CD4-positive, alpha-beta memory T cell (primary cell): ENCODE measurements at regions of chr15 and their contacts with region 1.

Region 1: DNA sequence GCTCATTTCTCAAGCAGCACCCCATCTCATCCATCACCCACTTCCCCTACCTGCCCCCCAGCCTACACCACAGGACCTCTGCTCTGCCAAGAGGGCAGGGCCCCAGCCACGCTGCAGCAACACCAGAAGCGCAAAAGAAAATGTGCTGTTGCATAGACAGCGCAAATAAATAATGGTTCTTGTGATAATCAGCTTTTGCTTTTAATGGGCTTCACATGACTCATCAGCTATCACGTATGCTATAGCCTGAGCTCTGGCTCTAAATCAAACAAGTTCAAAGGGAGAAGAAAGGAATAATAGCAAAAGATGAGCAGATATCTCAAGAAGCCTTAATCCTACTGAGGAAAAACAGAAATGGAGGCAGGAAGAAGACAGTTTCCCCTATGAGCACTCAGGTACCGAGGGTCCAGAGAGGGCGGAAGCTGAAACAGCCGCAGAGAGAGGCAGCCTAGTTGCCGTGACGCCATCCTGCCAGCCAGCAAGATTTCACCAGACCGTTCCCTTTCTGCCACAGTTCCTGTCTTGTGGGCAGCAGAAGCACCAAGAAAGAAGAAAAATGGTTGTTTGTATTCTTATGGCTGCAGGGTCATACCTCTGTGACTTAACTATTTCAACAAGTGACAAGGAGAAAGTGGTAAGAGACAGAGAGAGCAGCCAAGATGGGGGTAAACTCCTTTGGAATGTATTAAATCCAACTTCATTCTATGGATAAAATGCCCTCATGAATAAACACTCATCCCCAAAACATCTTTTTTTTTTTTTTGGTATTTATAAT is 22.0 kb downstream of the RAB27A start:
- DNase-seq: peak; percentile 77 to 89 (median 81)
- H3K4me3 ChIP-seq: peak overlapping the region in 1 of 2 donors; percentile 30
- H3K4me3 Mint-ChIP-seq: peak overlapping the region; percentile 69 to 85 (median 79)
- H3K27ac ChIP-seq: peak overlapping the region; percentile 69
- H3K27ac Mint-ChIP-seq: peak overlapping the region; percentile 90 to 98 (median 97)
- H3K4me1 ChIP-seq: peaks cover 69% of the 10 kb centered on the region
- H3K4me1 Mint-ChIP-seq: peaks cover 46 to 80% (median 62%) of the 10 kb centered on the region in 4 donors
- H3K27me3 ChIP-seq: no peaks in the 10 kb centered on the region
- H3K27me3 Mint-ChIP-seq: no peaks in the 10 kb centered on the region

Region 2: DNA sequence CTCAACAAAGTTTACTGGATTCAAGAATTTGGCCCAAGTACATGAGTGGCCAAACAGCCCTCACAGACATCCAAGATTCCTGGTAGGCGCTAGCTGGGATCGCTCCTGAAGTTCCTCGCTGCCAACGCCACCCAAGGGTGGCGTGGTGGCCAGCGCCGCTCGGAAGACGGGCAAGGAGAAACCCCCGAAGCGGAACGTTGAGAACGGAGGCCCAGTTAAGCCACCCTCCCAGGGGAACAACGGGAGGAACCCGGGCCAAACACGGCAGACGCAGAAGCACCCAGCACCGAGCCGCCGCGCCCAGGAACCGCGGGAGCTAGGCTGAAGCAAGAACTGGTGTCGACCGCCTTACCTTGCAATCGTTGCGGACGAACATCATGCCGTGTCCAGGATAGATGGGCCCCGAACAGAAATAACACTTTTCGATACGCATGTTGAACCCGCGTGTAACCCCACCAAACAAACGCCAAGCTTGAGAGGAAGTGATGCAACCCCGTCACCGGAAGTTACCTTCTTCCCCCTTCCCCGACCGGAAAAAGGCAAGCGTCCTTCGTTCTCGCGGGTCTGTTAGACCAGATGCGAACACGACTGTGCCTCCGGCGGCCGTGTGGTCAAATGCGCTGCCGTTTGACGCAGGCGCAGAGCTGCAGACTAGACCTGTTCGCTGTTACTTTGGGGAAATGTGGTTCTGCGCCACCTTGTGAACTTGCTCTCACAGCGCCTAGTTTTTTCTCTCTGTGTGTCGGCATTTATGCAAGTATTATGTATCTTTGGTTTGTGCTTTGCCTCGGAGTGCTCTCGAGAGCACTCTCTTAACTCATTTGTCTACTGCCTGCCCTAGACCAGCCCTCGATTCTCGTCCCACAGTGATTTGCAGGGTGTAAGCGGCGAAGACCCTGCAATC is 70.9 kb before region 1 on chr15 and contains the start of gene RSL24D1:
- CTCF ChIA-PET with region 1: interaction called, 9 read pairs
- POLR2A ChIA-PET with region 1: interaction called, 23 read pairs
- intact Hi-C with region 1: no loop called
- DNase-seq: peak; percentile 94 to 98 (median 97)
- H3K4me3 ChIP-seq: peak within 1 kb of the TSS; percentile 90 to 97
- H3K4me3 Mint-ChIP-seq: no peak within 1 kb of the TSS
- H3K27ac ChIP-seq: peak within 1 kb of the TSS; percentile 87
- H3K27ac Mint-ChIP-seq: no peak within 1 kb of the TSS
- H3K4me1 ChIP-seq: peaks cover 40% of the 10 kb centered on the region
- H3K4me1 Mint-ChIP-seq: peaks cover 10 to 17% (median 13%) of the 10 kb centered on the region in 4 donors
- H3K27me3 ChIP-seq: no peaks in the 10 kb centered on the region
- H3K27me3 Mint-ChIP-seq: no peaks in the 10 kb centered on the region
- total RNA-seq, gene RSL24D1: 103 to 107 TPM

Region 3: GRCh38 chr15:55250392-55250791 is 17.2 kb before region 1 on chr15:
- CTCF ChIA-PET with region 1: interaction called, 4 read pairs
- POLR2A ChIA-PET with region 1: interaction called, 47 read pairs
- intact Hi-C with region 1: loop called (anchors 1 kb)
- DNase-seq: no peak
- H3K4me3 ChIP-seq: no peak overlapping the region
- H3K4me3 Mint-ChIP-seq: peak overlapping the region in 5 of 8 donors; percentile 4 to 66 (median 8)
- H3K27ac ChIP-seq: no peak overlapping the region
- H3K27ac Mint-ChIP-seq: peak overlapping the region; percentile 5 to 89 (median 65)
- H3K4me1 ChIP-seq: peaks cover 60% of the 10 kb centered on the region
- H3K4me1 Mint-ChIP-seq: peaks cover 45 to 70% (median 55%) of the 10 kb centered on the region in 4 donors
- H3K27me3 ChIP-seq: no peaks in the 10 kb centered on the region
- H3K27me3 Mint-ChIP-seq: no peaks in the 10 kb centered on the region

Region 4: GRCh38 chr15:55279746-55280351 is 12.3 kb after region 1 on chr15:
- CTCF ChIA-PET with region 1: interaction called, 19 read pairs
- POLR2A ChIA-PET with region 1: interaction called, 201 read pairs
- intact Hi-C with region 1: loop called (anchors 1 kb)
- DNase-seq: peak; percentile 38 to 88 (median 45)
- H3K4me3 ChIP-seq: peak overlapping the region; percentile 14 to 25
- H3K4me3 Mint-ChIP-seq: peak overlapping the region; percentile 33 to 88 (median 70)
- H3K27ac ChIP-seq: peak overlapping the region; percentile 56
- H3K27ac Mint-ChIP-seq: peak overlapping the region; percentile 87 to 98 (median 95)
- H3K4me1 ChIP-seq: peaks cover 90% of the 10 kb centered on the region
- H3K4me1 Mint-ChIP-seq: peaks cover 72 to 99% (median 86%) of the 10 kb centered on the region in 4 donors
- H3K27me3 ChIP-seq: no peaks in the 10 kb centered on the region
- H3K27me3 Mint-ChIP-seq: no peaks in the 10 kb centered on the region

Region 5: GRCh38 chr15:55297315-55297714 is 29.7 kb after region 1 on chr15:
- CTCF ChIA-PET with region 1: no interaction called
- POLR2A ChIA-PET with region 1: no interaction called
- intact Hi-C with region 1: no loop called
- DNase-seq: no peak
- H3K4me3 ChIP-seq: no peak overlapping the region
- H3K4me3 Mint-ChIP-seq: no peak overlapping the region
- H3K27ac ChIP-seq: no peak overlapping the region
- H3K27ac Mint-ChIP-seq: no peak overlapping the region
- H3K4me1 ChIP-seq: no peaks in the 10 kb centered on the region
- H3K4me1 Mint-ChIP-seq: no peaks in the 10 kb centered on the region
- H3K27me3 ChIP-seq: no peaks in the 10 kb centered on the region
- H3K27me3 Mint-ChIP-seq: no peaks in the 10 kb centered on the region

Region 6: DNA sequence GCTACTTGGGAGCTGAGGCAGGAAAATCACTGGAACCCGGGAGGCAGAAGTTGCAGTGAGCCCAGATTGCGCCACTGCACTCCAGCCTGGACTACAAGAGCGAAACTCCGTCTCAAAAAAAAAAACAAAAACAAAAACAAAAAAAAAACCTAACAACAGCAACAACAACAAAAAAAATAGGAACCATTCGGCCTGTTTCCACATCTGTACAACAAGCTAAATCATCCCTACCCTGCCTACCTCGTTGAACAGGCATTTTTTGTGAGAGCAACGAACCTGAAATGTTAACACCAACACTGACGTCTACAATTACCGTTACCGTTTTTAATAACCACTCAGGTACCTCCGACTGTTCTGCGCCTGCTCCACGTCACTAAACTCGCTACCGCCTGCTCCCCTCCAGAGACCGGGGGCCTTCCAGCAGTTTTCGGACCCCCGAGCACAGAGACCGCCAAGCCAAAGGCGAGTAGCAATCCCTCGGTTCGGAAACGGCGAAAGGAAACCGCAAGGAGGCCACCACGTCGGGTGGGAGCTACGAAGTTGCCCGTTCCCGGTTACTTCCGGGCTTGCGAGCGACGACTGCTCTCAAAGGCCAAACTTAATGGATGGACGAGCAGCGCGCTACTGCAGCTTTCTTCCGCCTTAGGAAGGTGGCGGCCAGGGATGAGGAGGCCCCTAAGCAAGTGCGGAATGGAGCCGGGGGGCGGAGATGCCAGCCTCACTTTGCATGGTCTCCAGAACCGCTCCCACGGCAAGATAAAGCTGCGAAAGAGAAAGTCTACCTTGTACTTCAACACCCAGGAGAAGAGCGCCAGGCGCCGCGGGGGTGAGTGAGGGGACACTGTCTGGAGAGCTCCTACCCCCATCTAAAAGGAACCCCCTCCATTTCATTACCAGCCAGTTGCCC is 51.3 kb after region 1 on chr15 and contains the starts of genes PIGB and PIGBOS1:
- CTCF ChIA-PET with region 1: no interaction called
- POLR2A ChIA-PET with region 1: interaction called, 12 read pairs
- intact Hi-C with region 1: no loop called
- DNase-seq: peak; percentile 83 to 88 (median 87)
- H3K4me3 ChIP-seq: peak within 1 kb of the TSS; percentile 98 to 100
- H3K4me3 Mint-ChIP-seq: peak within 1 kb of the TSS; percentile 96 to 100 (median 98)
- H3K27ac ChIP-seq: peak within 1 kb of the TSS; percentile 93
- H3K27ac Mint-ChIP-seq: peak within 1 kb of the TSS; percentile 99 to 100 (median 100)
- H3K4me1 ChIP-seq: peaks cover 61% of the 10 kb centered on the region
- H3K4me1 Mint-ChIP-seq: peaks cover 44 to 82% (median 64%) of the 10 kb centered on the region in 4 donors
- H3K27me3 ChIP-seq: no peaks in the 10 kb centered on the region
- H3K27me3 Mint-ChIP-seq: no peaks in the 10 kb centered on the region
- total RNA-seq, gene PIGB: 26.4 to 28.6 TPM
- total RNA-seq, gene PIGBOS1: 14.1 to 20.3 TPM